CD4-positive, alpha-beta memory T cell (primary cell): ENCODE measurements at regions of chr15 and their contacts with region 1.

Region 1: GRCh38 chr15:61205346-61205921 is 23.7 kb downstream of the RORA start:
- DNase-seq: no peak
- H3K4me3 ChIP-seq: no peak overlapping the region
- H3K4me3 Mint-ChIP-seq: no peak overlapping the region
- H3K27ac ChIP-seq: no peak overlapping the region
- H3K27ac Mint-ChIP-seq: no peak overlapping the region
- H3K4me1 ChIP-seq: no peaks in the 10 kb centered on the region
- H3K4me1 Mint-ChIP-seq: no peaks in the 10 kb centered on the region
- H3K27me3 ChIP-seq: no peaks in the 10 kb centered on the region
- H3K27me3 Mint-ChIP-seq: peaks cover 1 to 2% of the 10 kb centered on the region in 2 donors

Region 2: GRCh38 chr15:61195116-61196002 is 10.1 kb before region 1 on chr15:
- CTCF ChIA-PET with region 1: interaction called, 14 read pairs
- POLR2A ChIA-PET with region 1: no interaction called
- intact Hi-C with region 1: no loop called
- DNase-seq: peak in 4 of 5 donors; percentile 5 to 14 (median 9)
- H3K4me3 ChIP-seq: no peak overlapping the region
- H3K4me3 Mint-ChIP-seq: no peak overlapping the region
- H3K27ac ChIP-seq: no peak overlapping the region
- H3K27ac Mint-ChIP-seq: no peak overlapping the region
- H3K4me1 ChIP-seq: no peaks in the 10 kb centered on the region
- H3K4me1 Mint-ChIP-seq: no peaks in the 10 kb centered on the region
- H3K27me3 ChIP-seq: no peaks in the 10 kb centered on the region
- H3K27me3 Mint-ChIP-seq: peaks cover 0 to 8% of the 10 kb centered on the region in 2 donors

Region 3: GRCh38 chr15:61227269-61227949 is 22.0 kb after region 1 on chr15:
- CTCF ChIA-PET with region 1: no interaction called
- POLR2A ChIA-PET with region 1: no interaction called
- intact Hi-C with region 1: no loop called
- DNase-seq: no peak
- H3K4me3 ChIP-seq: no peak overlapping the region
- H3K4me3 Mint-ChIP-seq: peak overlapping the region; percentile 59 to 83 (median 68)
- H3K27ac ChIP-seq: no peak overlapping the region
- H3K27ac Mint-ChIP-seq: no peak overlapping the region
- H3K4me1 ChIP-seq: peaks cover 12% of the 10 kb centered on the region
- H3K4me1 Mint-ChIP-seq: peaks cover 0 to 8% (median 4%) of the 10 kb centered on the region in 4 donors
- H3K27me3 ChIP-seq: peaks cover 9% of the 10 kb centered on the region
- H3K27me3 Mint-ChIP-seq: peaks cover 51% of the 10 kb centered on the region in 2 donors